Mammary epithelial cell (primary cell): ENCODE measurements at regions of chr9 and their contacts with region 1.

Region 1: GRCh38 chr9:5799314-5799713 is 33.6 kb downstream of the ERMP1 start:
- DNase-seq: peak; percentile 42
- H3K4me3 ChIP-seq: no peak overlapping the region
- H3K27ac ChIP-seq: no peak overlapping the region
- H3K4me1 ChIP-seq: no peaks in the 10 kb centered on the region
- H3K27me3 ChIP-seq: no peaks in the 10 kb centered on the region
- CTCF ChIP-seq: peak; percentile 87 to 93

Region 2: DNA sequence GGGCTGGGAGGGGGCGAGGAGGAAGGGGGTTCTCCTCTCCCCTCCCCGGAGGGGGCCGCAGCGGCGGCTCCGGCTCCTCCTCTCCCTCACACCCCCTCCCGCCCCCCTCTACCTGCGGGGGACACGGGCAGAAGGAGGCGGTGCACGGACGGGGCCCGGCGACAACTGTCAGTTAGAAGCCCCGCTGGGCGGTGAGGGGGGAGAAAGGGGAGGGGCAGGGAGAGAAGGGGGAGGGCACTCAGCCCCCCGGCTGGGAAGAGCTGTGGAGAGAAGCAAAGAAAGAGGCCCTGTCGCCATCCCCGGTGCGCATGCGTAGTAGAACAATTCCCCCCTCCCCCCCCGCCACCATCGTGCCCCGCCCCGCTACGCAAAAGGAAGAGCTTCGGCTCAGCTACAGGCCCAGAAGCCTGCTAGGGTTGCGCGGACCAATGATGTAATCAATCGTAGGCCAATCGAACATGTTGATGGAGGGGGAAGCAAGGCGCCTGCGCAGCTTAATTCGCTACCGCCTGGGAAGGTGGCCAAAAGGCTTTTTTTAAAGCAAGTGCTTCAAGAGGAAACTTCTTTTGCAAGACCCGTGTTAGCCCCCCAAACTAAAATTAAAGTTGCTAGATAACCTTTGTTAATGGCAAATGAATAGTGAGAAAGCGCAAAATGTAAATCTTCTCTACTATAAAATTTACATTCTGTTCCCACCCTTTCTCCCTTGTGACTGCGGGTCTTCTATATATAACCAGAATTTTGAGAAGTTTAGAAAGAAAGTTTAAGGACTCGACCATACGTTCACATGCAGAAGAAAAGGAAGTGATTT is 209.1 kb after region 1 on chr9:
- CTCF ChIA-PET with region 1: no interaction called
- dilution Hi-C with region 1: no loop called
- in situ Hi-C with region 1: no loop called
- intact Hi-C with region 1: loop called (anchors 5 kb)
- DNase-seq: peak; percentile 94
- H3K4me3 ChIP-seq: peak overlapping the region; percentile 58 to 94 (median 76)
- H3K27ac ChIP-seq: peak overlapping the region; percentile 70
- H3K4me1 ChIP-seq: peaks cover 21% of the 10 kb centered on the region
- H3K27me3 ChIP-seq: no peaks in the 10 kb centered on the region
- CTCF ChIP-seq: no peak

Region 3: GRCh38 chr9:6049798-6050197 is 250.5 kb after region 1 on chr9:
- CTCF ChIA-PET with region 1: interaction called, 17 read pairs
- dilution Hi-C with region 1: no loop called
- in situ Hi-C with region 1: no loop called
- intact Hi-C with region 1: loop called (anchors 1 kb)
- DNase-seq: peak; percentile 48
- H3K4me3 ChIP-seq: no peak overlapping the region
- H3K27ac ChIP-seq: no peak overlapping the region
- H3K4me1 ChIP-seq: peaks cover 7% of the 10 kb centered on the region
- H3K27me3 ChIP-seq: no peaks in the 10 kb centered on the region
- CTCF ChIP-seq: peak; percentile 61 to 73